Esophagus squamous epithelium (tissue), 5 donors: ENCODE measurements at regions of chr17 and their contacts with region 1.

Region 1: GRCh38 chr17:3738562-3739295 is 15.0 kb downstream of the HASPIN start:
- DNase-seq: no peak
- H3K4me3 ChIP-seq: peak overlapping the region in 3 of 4 donors; percentile 20 to 58 (median 32)
- H3K27ac ChIP-seq: peak overlapping the region; percentile 14 to 82 (median 69)
- H3K4me1 ChIP-seq: peaks cover 5 to 29% (median 14%) of the 10 kb centered on the region in 3 donors
- H3K27me3 ChIP-seq: no peaks in the 10 kb centered on the region
- CTCF ChIP-seq: peak in 1 of 6 experiments; percentile 14
- POLR2A ChIP-seq: no peak

Region 2: DNA sequence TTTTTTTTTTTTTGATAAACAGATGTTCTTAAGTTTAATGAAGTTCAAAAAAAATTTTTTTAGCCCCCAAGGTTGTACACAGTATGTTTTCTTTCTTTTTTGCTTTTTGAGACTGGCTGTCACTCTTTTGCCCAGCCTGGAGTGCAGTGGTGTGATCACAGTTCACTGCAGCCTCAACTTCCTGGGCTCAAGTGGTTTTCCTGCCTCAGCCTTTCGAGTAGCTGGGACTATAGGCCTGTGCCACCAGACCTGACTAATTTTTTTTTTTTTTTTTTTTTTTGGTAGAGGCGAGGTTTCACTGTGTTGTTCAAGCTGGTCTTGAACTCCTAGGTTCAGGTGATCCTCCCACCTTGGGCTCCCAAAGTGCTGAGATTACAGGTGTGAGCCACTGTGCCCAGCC is 49.5 kb after region 1 on chr17:
- intact Hi-C with region 1: no loop called
- DNase-seq: no peak
- H3K4me3 ChIP-seq: no peak overlapping the region
- H3K27ac ChIP-seq: no peak overlapping the region
- H3K4me1 ChIP-seq: peaks cover 0 to 20% (median 12%) of the 10 kb centered on the region in 3 donors
- H3K27me3 ChIP-seq: no peaks in the 10 kb centered on the region
- CTCF ChIP-seq: no peak
- POLR2A ChIP-seq: no peak

Region 3: DNA sequence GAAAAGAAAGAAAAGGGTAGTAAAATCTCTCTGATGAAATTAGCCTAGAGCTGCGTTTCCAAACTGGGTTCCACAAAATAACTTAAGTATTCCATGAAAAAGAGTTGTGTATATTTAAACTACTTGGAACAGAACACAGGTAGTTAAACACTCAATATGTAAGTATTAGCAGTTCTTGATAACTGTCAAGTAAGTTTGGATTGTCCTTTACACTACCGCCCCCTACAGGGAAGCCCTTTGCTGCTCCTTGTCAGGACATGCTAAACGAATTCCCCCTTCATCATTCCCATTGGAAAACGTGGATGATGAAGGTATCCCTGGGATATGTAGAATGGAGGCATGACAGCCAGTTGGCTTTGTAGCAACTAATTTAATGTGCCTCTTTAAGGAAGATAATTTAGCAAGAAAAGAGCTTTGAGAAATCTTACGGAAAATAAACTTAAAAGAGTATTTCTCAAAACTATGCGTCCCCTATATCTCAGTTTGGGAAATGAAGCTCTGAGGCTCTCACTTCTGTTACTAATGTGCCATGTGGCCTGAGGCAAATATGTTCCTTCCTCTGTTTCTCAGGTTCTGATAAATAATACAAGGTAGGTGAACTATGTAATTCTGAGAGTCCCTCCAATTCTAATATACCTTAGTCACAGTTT is 88.5 kb after region 1 on chr17:
- intact Hi-C with region 1: loop called (anchors 10 kb)
- DNase-seq: no peak
- H3K4me3 ChIP-seq: no peak overlapping the region
- H3K27ac ChIP-seq: peak overlapping the region in 3 of 4 donors; percentile 36 to 79 (median 53)
- H3K4me1 ChIP-seq: peaks cover 0 to 14% (median 3%) of the 10 kb centered on the region in 3 donors
- H3K27me3 ChIP-seq: no peaks in the 10 kb centered on the region
- CTCF ChIP-seq: peak; percentile 46 to 70 (median 58)
- POLR2A ChIP-seq: no peak